Naive thymus-derived CD4-positive, alpha-beta T cell (primary cell): ENCODE measurements at regions of chr14 and their contacts with region 1.

Region 1: GRCh38 chr14:90827916-90828610 is 11.8 kb upstream of the TTC7B start:
- DNase-seq: peak; percentile 83 to 94 (median 85)
- ATAC-seq: peak; percentile 100
- H3K4me3 ChIP-seq: peak overlapping the region; percentile 61
- H3K4me3 Mint-ChIP-seq: peak overlapping the region; percentile 69 to 91 (median 84)
- H3K27ac ChIP-seq: peak overlapping the region; percentile 69
- H3K27ac Mint-ChIP-seq: peak overlapping the region; percentile 79 to 96 (median 86)
- H3K4me1 ChIP-seq: peaks cover 14% of the 10 kb centered on the region in 2 donors
- H3K4me1 Mint-ChIP-seq: peaks cover 7 to 28% (median 18%) of the 10 kb centered on the region in 7 donors
- H3K27me3 ChIP-seq: no peaks in the 10 kb centered on the region
- H3K27me3 Mint-ChIP-seq: peaks cover 0 to 3% (median 0%) of the 10 kb centered on the region in 5 donors

Region 2: DNA sequence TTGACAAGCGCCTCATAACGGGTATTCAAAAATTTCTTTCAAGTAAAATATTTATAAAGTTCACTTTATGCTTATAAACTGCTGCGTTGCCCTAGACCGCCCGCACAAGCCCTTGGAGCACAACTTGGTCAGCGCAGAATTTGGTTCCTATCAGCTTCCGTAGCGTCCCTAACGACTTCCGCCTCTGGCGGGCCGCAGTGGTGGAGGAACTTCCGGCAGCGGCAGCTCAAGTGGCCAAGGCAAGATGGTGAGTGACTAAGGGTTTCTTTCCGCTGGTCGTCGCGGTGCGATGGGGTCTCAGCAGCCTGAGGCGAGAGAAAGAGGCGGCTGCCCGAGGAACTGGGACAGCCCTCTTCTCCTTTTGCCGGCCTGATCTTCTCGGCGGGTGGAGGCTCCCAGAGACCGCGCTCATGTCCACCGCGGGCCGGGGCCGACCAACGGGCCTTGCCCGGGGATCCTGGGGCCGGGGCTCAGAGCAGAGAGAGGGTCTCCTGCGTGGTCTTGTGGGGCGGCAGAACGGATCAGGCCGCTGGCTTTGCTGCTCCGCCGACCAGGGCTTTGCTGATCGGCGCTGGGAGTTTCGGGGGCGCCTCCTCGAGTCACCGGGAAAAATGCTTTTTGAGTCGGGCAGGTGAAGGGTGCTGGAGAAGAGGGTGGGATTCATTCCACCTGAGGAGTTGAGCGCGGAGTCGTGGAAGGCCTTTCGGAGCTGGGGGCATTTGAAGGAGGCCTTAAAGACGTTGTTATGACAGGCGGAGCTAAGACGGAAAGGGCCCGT is 571.5 kb before region 1 on chr14 and contains the start of gene PSMC1:
- CTCF ChIA-PET with region 1: no interaction called
- POLR2A ChIA-PET with region 1: no interaction called
- intact Hi-C with region 1: loop called in 1 of 2 experiments (anchors 1 kb)
- DNase-seq: peak; percentile 51 to 89 (median 85)
- ATAC-seq: peak; percentile 97
- H3K4me3 ChIP-seq: peak within 1 kb of the TSS; percentile 87
- H3K4me3 Mint-ChIP-seq: peak within 1 kb of the TSS; percentile 86 to 99 (median 96)
- H3K27ac ChIP-seq: peak within 1 kb of the TSS; percentile 86
- H3K27ac Mint-ChIP-seq: peak within 1 kb of the TSS; percentile 90 to 98 (median 96)
- H3K4me1 ChIP-seq: peaks cover 13 to 17% of the 10 kb centered on the region in 2 donors
- H3K4me1 Mint-ChIP-seq: peaks cover 12 to 39% (median 34%) of the 10 kb centered on the region in 7 donors
- H3K27me3 ChIP-seq: no peaks in the 10 kb centered on the region
- H3K27me3 Mint-ChIP-seq: peaks cover 0 to 10% (median 7%) of the 10 kb centered on the region in 5 donors
- total RNA-seq, gene PSMC1: 47.9 to 101 (median 58.2) TPM

Region 3: GRCh38 chr14:90815822-90816700 is 12.0 kb before region 1 on chr14 and contains the start of gene TTC7B:
- CTCF ChIA-PET with region 1: no interaction called
- POLR2A ChIA-PET with region 1: no interaction called
- intact Hi-C with region 1: loop called in 1 of 2 experiments (anchors 1 kb)
- DNase-seq: peak in 3 of 9 donors; percentile 25 to 59 (median 34)
- ATAC-seq: peak; percentile 80
- H3K4me3 ChIP-seq: no peak within 1 kb of the TSS
- H3K4me3 Mint-ChIP-seq: peak within 1 kb of the TSS; percentile 67 to 88 (median 75)
- H3K27ac ChIP-seq: no peak within 1 kb of the TSS
- H3K27ac Mint-ChIP-seq: peak within 1 kb of the TSS in 4 of 9 donors; percentile 2 to 33 (median 18)
- H3K4me1 ChIP-seq: peaks cover 4 to 5% of the 10 kb centered on the region in 2 donors
- H3K4me1 Mint-ChIP-seq: peaks cover 4 to 13% (median 10%) of the 10 kb centered on the region in 7 donors
- H3K27me3 ChIP-seq: peaks cover 0 to 4% of the 10 kb centered on the region in 2 donors
- H3K27me3 Mint-ChIP-seq: peaks cover 5 to 43% (median 6%) of the 10 kb centered on the region in 5 donors
- total RNA-seq, gene TTC7B: 0.65 to 9.5 (median 5.0) TPM in 4 of 5 experiments, not detected in the other